Naive thymus-derived CD4-positive, alpha-beta T cell (primary cell): ENCODE measurements at regions of chr19 and their contacts with region 1.

Region 1: DNA sequence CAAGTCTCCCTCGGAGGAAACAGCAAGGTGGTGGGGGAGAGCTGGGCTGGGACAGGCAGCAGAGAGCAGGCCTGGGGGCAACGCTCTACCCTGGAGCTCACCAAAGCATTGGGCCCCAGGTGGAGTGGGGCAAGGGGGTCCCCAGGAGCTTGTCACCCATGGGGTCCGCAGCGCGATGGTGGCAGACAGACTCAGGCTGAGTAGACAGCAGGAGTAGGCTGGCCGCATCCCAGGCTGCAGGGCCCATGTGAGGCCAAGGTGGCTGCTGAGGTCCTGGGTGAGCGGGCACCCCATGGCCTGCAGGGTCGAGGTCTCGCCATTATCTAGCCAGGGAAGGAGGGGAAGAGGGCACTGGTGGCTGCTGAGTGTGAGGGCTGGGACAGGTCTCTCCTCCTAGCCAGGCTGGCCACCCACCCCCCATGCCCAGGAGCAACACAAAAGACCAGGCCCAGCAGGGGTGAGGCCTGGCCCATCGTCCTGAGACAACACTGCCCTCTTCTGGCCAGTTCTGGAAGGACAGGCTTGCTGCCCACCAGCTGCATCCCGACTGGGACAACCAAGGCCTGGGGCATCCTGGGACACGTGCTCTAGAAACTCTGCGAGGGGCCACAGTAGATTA is 33.1 kb downstream of the CEBPG start:
- DNase-seq: peak; percentile 37 to 80 (median 63)
- ATAC-seq: peak; percentile 86
- H3K4me3 ChIP-seq: no peak overlapping the region
- H3K4me3 Mint-ChIP-seq: no peak overlapping the region
- H3K27ac ChIP-seq: no peak overlapping the region
- H3K27ac Mint-ChIP-seq: no peak overlapping the region
- H3K4me1 ChIP-seq: no peaks in the 10 kb centered on the region
- H3K4me1 Mint-ChIP-seq: peaks cover 0 to 3% (median 0%) of the 10 kb centered on the region in 7 donors
- H3K27me3 ChIP-seq: no peaks in the 10 kb centered on the region
- H3K27me3 Mint-ChIP-seq: no peaks in the 10 kb centered on the region

Region 2: GRCh38 chr19:33125929-33126388 is 280.7 kb before region 1 on chr19:
- CTCF ChIA-PET with region 1: interaction called, 5 read pairs
- POLR2A ChIA-PET with region 1: no interaction called
- intact Hi-C with region 1: loop called in 1 of 2 experiments (anchors 5 kb)
- DNase-seq: peak; percentile 14 to 68 (median 55)
- ATAC-seq: peak; percentile 96
- H3K4me3 ChIP-seq: no peak overlapping the region
- H3K4me3 Mint-ChIP-seq: no peak overlapping the region
- H3K27ac ChIP-seq: no peak overlapping the region
- H3K27ac Mint-ChIP-seq: peak overlapping the region in 4 of 9 donors; percentile 34 to 71 (median 60)
- H3K4me1 ChIP-seq: no peaks in the 10 kb centered on the region
- H3K4me1 Mint-ChIP-seq: peaks cover 0 to 9% (median 7%) of the 10 kb centered on the region in 7 donors
- H3K27me3 ChIP-seq: no peaks in the 10 kb centered on the region
- H3K27me3 Mint-ChIP-seq: no peaks in the 10 kb centered on the region

Region 3: GRCh38 chr19:33214596-33214995 is 192.0 kb before region 1 on chr19:
- CTCF ChIA-PET with region 1: no interaction called
- POLR2A ChIA-PET with region 1: no interaction called
- intact Hi-C with region 1: no loop called
- DNase-seq: no peak
- ATAC-seq: no peak
- H3K4me3 ChIP-seq: no peak overlapping the region
- H3K4me3 Mint-ChIP-seq: no peak overlapping the region
- H3K27ac ChIP-seq: no peak overlapping the region
- H3K27ac Mint-ChIP-seq: no peak overlapping the region
- H3K4me1 ChIP-seq: no peaks in the 10 kb centered on the region
- H3K4me1 Mint-ChIP-seq: no peaks in the 10 kb centered on the region
- H3K27me3 ChIP-seq: no peaks in the 10 kb centered on the region
- H3K27me3 Mint-ChIP-seq: peaks cover 0 to 5% (median 0%) of the 10 kb centered on the region in 5 donors

Region 4: GRCh38 chr19:33241530-33242101 is 165.0 kb before region 1 on chr19:
- CTCF ChIA-PET with region 1: interaction called, 34 read pairs
- POLR2A ChIA-PET with region 1: no interaction called
- intact Hi-C with region 1: loop called (anchors 1 kb)
- DNase-seq: no peak
- ATAC-seq: peak; percentile 68
- H3K4me3 ChIP-seq: no peak overlapping the region
- H3K4me3 Mint-ChIP-seq: no peak overlapping the region
- H3K27ac ChIP-seq: no peak overlapping the region
- H3K27ac Mint-ChIP-seq: no peak overlapping the region
- H3K4me1 ChIP-seq: peaks cover 0 to 20% of the 10 kb centered on the region in 2 donors
- H3K4me1 Mint-ChIP-seq: peaks cover 0 to 2% (median 0%) of the 10 kb centered on the region in 7 donors
- H3K27me3 ChIP-seq: no peaks in the 10 kb centered on the region
- H3K27me3 Mint-ChIP-seq: peaks cover 0 to 10% (median 0%) of the 10 kb centered on the region in 5 donors

Region 5: DNA sequence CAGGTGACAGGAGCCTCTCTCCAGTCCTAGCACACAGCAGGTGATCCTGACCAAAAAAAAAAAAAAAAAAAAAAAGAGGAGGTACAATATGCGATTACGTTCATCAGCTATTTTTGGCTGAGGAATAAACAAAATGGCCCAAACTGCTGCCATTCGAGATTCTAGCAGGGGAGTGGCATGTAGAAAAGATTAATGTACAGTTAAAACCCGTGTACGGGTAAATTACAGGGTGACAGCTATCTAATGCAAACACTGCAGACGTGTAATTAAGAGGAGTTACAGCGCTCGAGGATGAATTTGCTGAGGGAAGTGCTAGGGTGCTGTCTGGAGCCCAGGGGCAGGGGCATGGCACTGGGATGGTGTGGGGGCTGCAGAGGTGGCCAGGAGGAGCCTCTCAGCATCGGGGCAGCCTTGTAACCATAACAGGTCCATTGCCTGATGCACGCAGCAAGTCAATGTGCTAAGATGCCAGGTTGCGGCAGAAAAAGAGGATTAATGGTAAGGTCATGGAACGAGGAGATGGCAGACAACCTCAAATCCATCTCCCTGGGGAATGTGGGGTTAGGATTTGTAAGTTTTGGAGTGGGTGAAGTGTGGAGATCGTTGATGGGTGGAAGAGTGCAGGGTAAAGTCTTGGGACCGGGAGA is 232.5 kb after region 1 on chr19:
- CTCF ChIA-PET with region 1: no interaction called
- POLR2A ChIA-PET with region 1: no interaction called
- intact Hi-C with region 1: no loop called
- DNase-seq: no peak
- ATAC-seq: no peak
- H3K4me3 ChIP-seq: no peak overlapping the region
- H3K4me3 Mint-ChIP-seq: no peak overlapping the region
- H3K27ac ChIP-seq: no peak overlapping the region
- H3K27ac Mint-ChIP-seq: no peak overlapping the region
- H3K4me1 ChIP-seq: no peaks in the 10 kb centered on the region
- H3K4me1 Mint-ChIP-seq: no peaks in the 10 kb centered on the region
- H3K27me3 ChIP-seq: no peaks in the 10 kb centered on the region
- H3K27me3 Mint-ChIP-seq: peaks cover 0 to 34% (median 29%) of the 10 kb centered on the region in 5 donors